Mammary epithelial cell (primary cell): ENCODE measurements at regions of chr11 and their contacts with region 1.

Region 1: DNA sequence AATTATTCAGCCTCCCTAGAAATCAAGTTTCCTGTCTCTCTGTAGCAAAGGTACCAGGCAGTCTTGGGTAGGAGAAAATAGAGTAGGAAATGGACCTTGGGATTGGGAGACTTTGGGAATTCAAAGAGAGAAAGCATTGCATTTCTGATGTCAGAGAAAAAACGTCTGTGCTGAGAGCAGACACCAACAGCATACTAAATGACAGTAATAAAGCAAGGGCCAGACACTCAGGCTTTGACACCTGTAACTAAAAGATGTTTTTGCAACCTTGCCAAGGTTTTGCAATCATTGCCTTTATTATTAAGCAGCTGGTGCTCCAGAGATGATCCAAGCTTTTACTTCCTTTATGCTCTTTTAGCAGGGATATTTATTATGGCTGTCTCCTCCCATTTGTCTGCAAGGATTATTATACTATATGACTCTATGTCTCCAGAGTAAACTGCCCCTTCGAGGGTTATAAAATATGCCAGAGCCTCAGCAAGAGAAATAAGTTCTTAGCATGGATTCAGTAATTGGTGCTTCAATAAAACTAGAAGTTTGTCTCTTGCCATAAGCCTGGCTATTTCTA is 85.2 kb upstream of the GRAMD1B start:
- DNase-seq: no peak
- H3K4me3 ChIP-seq: no peak overlapping the region
- H3K27ac ChIP-seq: no peak overlapping the region
- H3K4me1 ChIP-seq: no peaks in the 10 kb centered on the region
- H3K27me3 ChIP-seq: no peaks in the 10 kb centered on the region
- CTCF ChIP-seq: no peak

Region 2: DNA sequence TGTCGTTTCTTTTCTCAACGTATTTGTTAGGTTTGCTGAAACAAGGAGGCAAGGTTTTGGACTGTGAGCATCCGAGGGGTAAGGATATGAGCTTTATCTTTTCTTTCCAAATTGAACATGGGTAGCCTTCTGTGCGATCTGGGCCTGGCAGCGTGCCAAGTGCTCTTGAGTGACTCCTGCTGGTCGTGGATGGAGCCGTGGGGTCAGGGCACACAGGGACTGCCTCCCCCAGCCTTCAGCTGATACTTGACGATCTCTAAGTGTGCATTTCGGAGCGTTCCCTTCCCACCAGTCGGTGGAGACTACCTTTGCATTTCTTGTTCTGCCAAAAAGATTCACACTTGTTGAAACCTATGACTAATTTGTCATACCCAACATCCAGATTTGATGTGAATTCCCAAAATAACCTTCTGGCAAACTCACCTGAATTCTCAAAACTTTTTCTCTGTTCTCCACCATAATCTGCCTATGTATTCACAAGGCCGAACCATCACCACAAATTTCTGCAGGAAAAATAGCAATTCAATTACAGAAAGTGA is 109.7 kb before region 1 on chr11:
- CTCF ChIA-PET with region 1: no interaction called
- dilution Hi-C with region 1: no loop called
- in situ Hi-C with region 1: no loop called
- intact Hi-C with region 1: no loop called
- DNase-seq: no peak
- H3K4me3 ChIP-seq: no peak overlapping the region
- H3K27ac ChIP-seq: no peak overlapping the region
- H3K4me1 ChIP-seq: peaks cover 6% of the 10 kb centered on the region
- H3K27me3 ChIP-seq: no peaks in the 10 kb centered on the region
- CTCF ChIP-seq: peak; percentile 50 to 52

Region 3: DNA sequence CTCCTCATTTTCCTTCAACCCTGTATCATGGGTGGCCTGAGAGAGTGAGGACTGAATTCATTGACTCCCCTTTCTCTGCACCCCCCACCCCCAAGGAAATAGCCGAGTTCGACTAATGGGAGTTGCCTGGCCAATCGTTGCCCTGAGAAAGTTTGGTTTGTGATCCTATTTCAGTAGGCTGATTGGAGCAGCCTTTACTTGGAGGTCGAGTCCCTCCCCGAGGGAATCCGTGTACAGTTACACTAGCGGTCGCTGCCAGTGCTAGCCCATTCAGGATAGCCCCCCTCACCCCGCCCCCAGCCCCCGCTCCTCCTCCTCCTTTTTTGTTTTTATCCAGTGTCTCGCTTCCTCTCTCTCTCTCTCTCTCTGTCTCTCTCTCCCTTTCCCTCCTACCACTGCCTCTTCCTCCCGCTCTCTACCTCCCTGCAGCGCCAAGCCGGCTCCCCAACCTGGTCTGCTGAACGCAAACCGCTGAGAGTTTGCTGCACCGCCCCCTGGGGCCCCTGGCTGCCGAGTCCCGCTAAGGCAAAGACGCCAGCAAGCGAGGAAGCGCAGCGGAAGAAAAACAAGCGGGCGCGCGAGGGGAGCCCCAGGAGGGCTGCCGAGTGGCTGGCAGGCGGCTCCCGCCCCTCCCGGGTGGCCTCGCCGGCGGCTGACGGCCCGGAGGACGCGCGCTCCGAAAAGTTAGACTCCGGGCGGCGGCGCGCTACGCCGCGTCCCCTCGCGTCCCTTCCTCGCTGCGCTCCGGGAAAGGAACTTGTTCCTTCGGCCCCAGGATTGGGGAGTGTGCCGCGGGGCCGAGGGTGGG is 85.2 kb after region 1 on chr11 and contains the start of gene GRAMD1B:
- CTCF ChIA-PET with region 1: no interaction called
- dilution Hi-C with region 1: loop called (anchors 5 kb)
- in situ Hi-C with region 1: no loop called
- intact Hi-C with region 1: no loop called
- DNase-seq: no peak
- H3K4me3 ChIP-seq: peak within 1 kb of the TSS; percentile 32 to 40 (median 33)
- H3K27ac ChIP-seq: no peak within 1 kb of the TSS
- H3K4me1 ChIP-seq: peaks cover 11% of the 10 kb centered on the region
- H3K27me3 ChIP-seq: peaks cover 17% of the 10 kb centered on the region
- CTCF ChIP-seq: no peak
- total RNA-seq, gene GRAMD1B: 0.17 TPM in 1 of 2 donors, not detected in the other

Region 4: DNA sequence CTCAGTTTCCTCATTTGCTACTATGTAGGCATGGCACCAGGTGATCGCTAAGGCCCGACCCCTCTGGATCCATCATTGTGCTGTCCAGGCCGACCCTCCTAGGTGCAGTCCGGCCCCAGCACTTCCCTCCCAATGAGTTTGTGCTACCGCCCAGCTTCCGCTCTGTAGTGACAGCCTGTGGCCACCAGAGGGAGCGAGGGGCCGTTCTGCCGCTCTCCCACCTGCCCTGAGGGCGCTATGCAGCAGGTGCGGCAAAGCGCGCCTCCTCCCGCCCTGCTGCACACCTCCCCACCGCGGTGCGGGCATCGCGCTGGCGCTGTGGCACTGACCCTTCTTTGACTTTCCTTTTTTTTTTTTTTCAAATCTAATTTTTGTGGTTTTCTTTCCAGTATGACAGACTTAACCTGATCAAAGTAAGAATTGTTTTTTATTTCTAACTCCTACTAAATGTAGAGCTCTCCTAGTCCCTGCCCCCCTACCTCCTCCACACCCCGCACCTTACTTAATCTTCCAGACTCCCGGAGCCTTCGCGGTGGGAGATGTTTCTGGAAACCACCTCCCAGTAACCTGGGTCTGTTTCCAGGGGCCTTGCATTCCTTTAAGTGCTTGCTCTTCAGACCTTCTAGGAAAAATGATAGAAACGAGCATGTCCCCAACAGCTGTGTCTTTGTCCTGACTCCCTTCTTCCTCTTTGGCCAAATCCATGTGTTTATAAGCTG is 235.8 kb after region 1 on chr11:
- CTCF ChIA-PET with region 1: no interaction called
- dilution Hi-C with region 1: no loop called
- in situ Hi-C with region 1: no loop called
- intact Hi-C with region 1: no loop called
- DNase-seq: peak; percentile 53
- H3K4me3 ChIP-seq: no peak overlapping the region
- H3K27ac ChIP-seq: no peak overlapping the region
- H3K4me1 ChIP-seq: no peaks in the 10 kb centered on the region
- H3K27me3 ChIP-seq: peaks cover 2% of the 10 kb centered on the region
- CTCF ChIP-seq: peak; percentile 83 to 96